Dorsolateral prefrontal cortex (tissue), 120 donors: ENCODE measurements at regions of chr19 and their contacts with region 1.

Region 1: DNA sequence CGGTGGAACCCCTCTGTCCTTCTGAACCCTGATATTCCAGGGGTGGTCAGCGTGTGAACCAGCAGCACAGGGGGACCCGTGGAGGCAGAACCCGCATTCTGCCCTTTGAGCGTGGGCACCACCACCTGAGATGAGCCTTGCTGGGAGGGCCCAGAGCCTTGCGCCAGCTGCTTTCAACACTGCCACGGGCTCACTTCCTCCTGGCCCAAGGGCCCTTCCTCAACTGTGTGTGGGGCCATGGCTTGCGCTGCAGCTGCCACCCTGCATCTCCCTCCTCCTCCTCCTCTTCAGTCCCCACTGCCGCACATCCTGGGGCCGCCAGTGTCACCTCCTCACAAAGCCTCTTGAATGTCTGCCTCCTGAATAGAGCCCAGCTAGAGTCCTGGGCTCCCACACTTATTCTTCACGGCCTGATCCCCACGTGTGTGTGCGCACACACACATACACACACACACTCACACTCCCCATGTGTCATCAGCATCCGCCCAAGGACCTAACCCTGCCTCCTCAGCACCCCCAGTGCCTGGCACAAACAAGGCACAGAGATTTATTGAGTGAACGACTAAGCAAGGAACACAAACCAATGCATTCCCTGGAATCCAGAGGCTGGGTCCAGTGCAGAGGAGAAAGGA is 26.9 kb upstream of the TMEM160 start:
- DNase-seq: no peak
- H3K4me3 ChIP-seq: no peak overlapping the region
- H3K27ac ChIP-seq: peak overlapping the region in 26 of 59 donors; percentile 0 to 71 (median 32)
- H3K27me3 ChIP-seq: no peaks in the 10 kb centered on the region
- CTCF ChIP-seq: no peak

Region 2: DNA sequence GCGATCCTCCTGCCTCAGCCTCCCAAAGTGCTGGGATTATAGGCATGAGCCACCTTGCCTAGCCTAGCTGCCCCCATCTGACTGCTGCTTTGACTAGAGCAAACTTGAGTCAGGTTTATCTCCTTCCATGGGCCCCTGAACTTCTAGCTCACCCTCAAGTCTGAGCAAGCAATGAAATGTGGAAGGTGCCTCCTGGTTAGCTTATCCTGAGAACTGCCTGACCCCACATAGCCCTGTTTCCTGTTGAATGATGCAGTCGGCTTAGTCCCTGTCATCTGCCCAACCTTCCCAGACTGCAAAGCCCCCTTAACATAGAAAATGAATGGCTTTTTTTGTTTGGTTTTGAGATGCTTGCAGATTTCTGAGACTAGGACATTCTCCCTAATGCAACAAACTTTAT is 18.0 kb before region 1 on chr19:
- intact Hi-C with region 1: no loop called
- DNase-seq: no peak
- H3K4me3 ChIP-seq: no peak overlapping the region
- H3K27ac ChIP-seq: no peak overlapping the region
- H3K27me3 ChIP-seq: no peaks in the 10 kb centered on the region
- CTCF ChIP-seq: no peak

Region 3: GRCh38 chr19:47124937-47125668 is 49.8 kb after region 1 on chr19:
- intact Hi-C with region 1: loop called (anchors 1 kb)
- DNase-seq: no peak
- H3K4me3 ChIP-seq: no peak overlapping the region
- H3K27ac ChIP-seq: no peak overlapping the region
- H3K27me3 ChIP-seq: no peaks in the 10 kb centered on the region
- CTCF ChIP-seq: peak; percentile 62 to 92 (median 78)

Region 4: GRCh38 chr19:47428177-47428894 is 353.0 kb after region 1 on chr19:
- intact Hi-C with region 1: no loop called
- DNase-seq: peak; percentile 64 to 95 (median 88)
- H3K4me3 ChIP-seq: peak overlapping the region in 42 of 59 donors; percentile 5 to 54 (median 28)
- H3K27ac ChIP-seq: peak overlapping the region in 10 of 59 donors; percentile 4 to 43 (median 14)
- H3K27me3 ChIP-seq: peaks cover 0 to 60% (median 15%) of the 10 kb centered on the region in 45 donors
- CTCF ChIP-seq: no peak